ENCODE measurements at regions of chr17 and their contacts with region 1.

Region 1: GRCh38 chr17:78421484-78422266 is 43.2 kb downstream of the PGS1 start:
- DNase-seq: peak; percentile 68 to 79
- H3K4me3 ChIP-seq: no peak overlapping the region
- H3K27ac ChIP-seq: no peak overlapping the region
- H3K4me1 ChIP-seq: no peaks in the 10 kb centered on the region
- H3K27me3 ChIP-seq: no peaks in the 10 kb centered on the region
- CTCF ChIP-seq: peak; percentile 96 to 100 (median 98)
- POLR2A ChIP-seq: no peak

Region 2: GRCh38 chr17:78250891-78251794 is 170.5 kb before region 1 on chr17:
- intact Hi-C with region 1: loop called (anchors 10 kb)
- DNase-seq: peak; percentile 72 to 83
- H3K4me3 ChIP-seq: no peak overlapping the region
- H3K27ac ChIP-seq: no peak overlapping the region
- H3K4me1 ChIP-seq: no peaks in the 10 kb centered on the region
- H3K27me3 ChIP-seq: no peaks in the 10 kb centered on the region
- CTCF ChIP-seq: peak; percentile 99
- POLR2A ChIP-seq: peak in 1 of 2 donors; percentile 23

Region 3: DNA sequence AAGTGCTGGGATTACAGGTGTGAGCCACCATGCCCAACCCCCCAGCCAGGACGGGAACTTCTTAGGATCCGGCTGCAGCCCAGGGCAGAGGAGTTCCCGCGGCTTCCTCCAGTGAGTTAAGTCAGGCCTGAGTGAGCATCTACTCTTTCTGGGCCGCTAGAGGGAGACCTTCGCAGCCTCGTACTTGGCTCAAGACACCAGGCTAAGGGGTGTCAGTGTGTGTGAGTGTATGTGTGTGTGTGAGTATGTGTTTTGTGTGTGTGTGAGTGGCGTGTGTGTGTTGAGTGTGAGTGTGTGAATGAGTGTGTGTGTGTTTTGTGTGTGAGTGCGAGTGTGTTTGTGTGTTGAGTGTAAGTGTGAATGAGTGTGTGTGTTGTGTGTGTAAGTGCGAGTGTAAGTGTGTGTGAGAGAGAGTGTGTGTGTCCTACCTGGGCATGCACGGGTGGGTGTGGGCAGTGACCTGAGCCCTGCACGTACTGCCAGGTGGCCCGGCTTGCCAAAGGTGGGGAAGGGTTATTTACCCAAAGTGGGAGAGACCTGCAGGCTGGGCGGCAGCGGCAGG is 131.8 kb before region 1 on chr17:
- intact Hi-C with region 1: loop called (anchors 5 kb)
- DNase-seq: peak; percentile 76 to 82
- H3K4me3 ChIP-seq: no peak overlapping the region
- H3K27ac ChIP-seq: no peak overlapping the region
- H3K4me1 ChIP-seq: no peaks in the 10 kb centered on the region
- H3K27me3 ChIP-seq: no peaks in the 10 kb centered on the region
- CTCF ChIP-seq: peak; percentile 62 to 86 (median 80)
- POLR2A ChIP-seq: no peak

Region 4: GRCh38 chr17:78360371-78361224 is 61.1 kb before region 1 on chr17:
- intact Hi-C with region 1: loop called (anchors 5 kb)
- DNase-seq: peak; percentile 92 to 93
- H3K4me3 ChIP-seq: peak overlapping the region; percentile 43 to 74
- H3K27ac ChIP-seq: peak overlapping the region; percentile 72 to 95
- H3K4me1 ChIP-seq: peaks cover 0 to 8% of the 10 kb centered on the region in 2 donors
- H3K27me3 ChIP-seq: no peaks in the 10 kb centered on the region
- CTCF ChIP-seq: peak; percentile 91 to 96 (median 92)
- POLR2A ChIP-seq: peak in 1 of 2 donors; percentile 16

Measured in uterus (tissue), 4 donors.